SK-N-SH (cell line): ENCODE measurements at regions of chr14 and their contacts with region 1.

Region 1: DNA sequence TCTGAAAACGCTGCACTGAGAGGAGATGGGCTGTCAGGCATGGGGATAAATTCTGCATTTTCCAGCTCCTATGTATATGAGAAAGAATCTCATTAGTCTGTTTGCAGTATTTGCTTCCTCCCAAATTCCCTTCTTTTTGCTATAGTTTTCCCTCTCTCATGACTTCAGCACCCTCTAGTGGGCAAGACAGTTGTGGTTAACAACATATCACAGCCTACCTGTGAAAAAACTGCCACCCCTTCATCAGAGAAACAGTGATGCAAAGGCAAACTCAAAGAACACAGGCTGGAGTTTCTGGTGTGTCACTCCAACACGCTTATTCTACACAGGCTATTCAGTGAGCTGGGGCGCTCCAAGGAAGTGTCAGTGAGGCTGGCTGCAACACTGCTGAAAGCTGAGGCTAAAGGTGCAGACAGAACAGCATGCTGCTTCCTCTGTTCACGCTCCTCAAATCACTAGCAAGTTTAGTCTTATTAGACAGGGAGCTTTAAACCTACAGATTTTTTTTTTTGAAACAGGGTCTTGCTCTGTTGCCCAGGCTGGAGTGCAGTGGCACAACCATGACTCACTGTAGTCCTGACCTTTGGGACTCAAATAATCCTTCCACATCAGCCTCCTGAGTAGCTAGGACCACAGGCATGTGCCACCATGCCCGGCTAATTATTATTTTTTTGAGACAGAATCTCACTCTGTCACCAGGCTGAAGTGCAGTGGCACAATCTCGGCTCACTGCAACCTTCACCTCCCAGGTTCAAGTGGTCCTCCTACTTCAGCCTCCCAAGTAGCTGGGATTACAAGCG is 19.3 kb downstream of the ZC2HC1C start:
- DNase-seq: peak; percentile 66
- H3K4me3 ChIP-seq: no peak overlapping the region
- H3K27ac ChIP-seq: no peak overlapping the region
- H3K4me1 ChIP-seq: no peaks in the 10 kb centered on the region
- H3K27me3 ChIP-seq: no peaks in the 10 kb centered on the region
- CTCF ChIP-seq: peak; percentile 91
- EP300 ChIP-seq: no peak
- RAD21 ChIP-seq: peak; percentile 95

Region 2: DNA sequence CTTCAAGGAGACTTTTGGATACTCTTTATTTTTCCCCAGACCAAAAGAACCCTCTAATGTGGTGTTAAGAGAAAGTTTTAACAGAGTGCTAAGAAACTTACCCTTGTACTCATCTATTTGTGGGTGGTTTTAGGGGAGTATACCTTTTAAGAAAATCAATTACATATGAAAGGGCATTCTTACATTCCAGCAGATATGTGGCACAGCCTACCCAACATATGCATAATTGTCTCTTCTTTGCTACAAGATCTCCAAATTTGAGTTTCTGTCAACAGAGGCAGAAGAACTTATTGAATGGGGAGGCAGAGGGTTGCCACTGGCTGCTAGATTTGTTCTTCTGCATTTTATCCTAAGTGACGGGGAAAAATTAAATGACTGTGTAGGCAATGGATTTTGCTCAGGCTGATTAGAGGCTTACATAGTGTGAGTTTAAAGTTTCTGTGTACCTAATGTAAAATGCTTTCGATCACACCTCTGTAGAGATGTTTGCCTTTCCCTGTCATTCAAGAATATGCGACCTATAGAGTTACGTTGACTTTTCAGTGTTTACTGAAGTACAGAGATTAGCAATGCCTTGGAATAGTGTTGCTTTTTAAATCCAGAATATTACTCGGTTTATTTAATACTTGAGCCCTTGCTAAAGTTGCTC is 267.4 kb before region 1 on chr14:
- CTCF ChIA-PET with region 1: no interaction called
- POLR2A ChIA-PET with region 1: no interaction called
- DNase-seq: no peak
- H3K4me3 ChIP-seq: no peak overlapping the region
- H3K27ac ChIP-seq: no peak overlapping the region
- H3K4me1 ChIP-seq: peaks cover 0 to 7% of the 10 kb centered on the region in 2 experiments; a peak in 2 of 4 replicates
- H3K27me3 ChIP-seq: no peaks in the 10 kb centered on the region
- CTCF ChIP-seq: no peak
- EP300 ChIP-seq: no peak
- RAD21 ChIP-seq: no peak

Region 3: DNA sequence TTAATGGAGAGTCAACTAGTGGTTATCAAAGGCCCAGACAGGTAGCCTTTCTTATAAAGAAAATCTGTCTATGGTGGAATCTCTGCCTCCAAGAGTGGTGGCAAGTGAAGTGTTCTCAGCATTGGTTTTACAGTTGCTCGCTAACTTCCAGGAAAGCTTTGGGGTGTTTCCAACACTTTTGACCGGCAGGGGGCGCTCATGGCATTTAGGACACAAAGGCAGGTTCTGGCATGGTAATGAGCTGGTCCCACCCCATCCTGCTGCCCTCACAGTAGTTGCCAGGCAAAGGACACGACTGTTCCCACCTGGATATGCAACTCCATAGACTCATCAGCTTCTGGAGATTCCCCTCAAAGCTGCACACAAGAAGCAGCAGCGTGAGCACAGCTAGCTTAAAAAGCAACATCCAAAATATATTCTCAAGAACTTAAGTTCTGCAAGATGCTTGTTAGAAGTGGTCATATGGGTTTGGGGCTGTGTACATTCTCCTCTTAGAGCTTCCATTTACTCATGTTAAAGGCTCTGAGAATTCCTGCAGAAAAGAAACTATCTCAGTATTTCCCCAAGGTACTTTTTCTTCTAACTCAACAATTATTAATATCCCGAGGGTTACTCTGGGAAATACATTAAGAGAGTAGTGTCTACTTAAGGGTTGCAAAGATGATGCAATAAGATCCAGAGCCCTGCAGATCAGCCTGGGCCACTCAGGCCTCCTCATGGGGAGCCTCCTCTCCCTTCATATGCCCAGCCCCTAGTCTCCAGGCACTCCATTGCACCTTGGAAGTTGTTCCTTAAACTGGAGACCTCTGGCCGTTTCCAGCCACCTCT is 227.7 kb before region 1 on chr14:
- CTCF ChIA-PET with region 1: interaction called, 44 read pairs
- POLR2A ChIA-PET with region 1: no interaction called
- DNase-seq: peak; percentile 82
- H3K4me3 ChIP-seq: no peak overlapping the region
- H3K27ac ChIP-seq: no peak overlapping the region
- H3K4me1 ChIP-seq: no peaks in the 10 kb centered on the region; a peak in 1 of 4 replicates
- H3K27me3 ChIP-seq: no peaks in the 10 kb centered on the region
- CTCF ChIP-seq: peak; percentile 87
- EP300 ChIP-seq: no peak
- RAD21 ChIP-seq: peak; percentile 94

Region 4: DNA sequence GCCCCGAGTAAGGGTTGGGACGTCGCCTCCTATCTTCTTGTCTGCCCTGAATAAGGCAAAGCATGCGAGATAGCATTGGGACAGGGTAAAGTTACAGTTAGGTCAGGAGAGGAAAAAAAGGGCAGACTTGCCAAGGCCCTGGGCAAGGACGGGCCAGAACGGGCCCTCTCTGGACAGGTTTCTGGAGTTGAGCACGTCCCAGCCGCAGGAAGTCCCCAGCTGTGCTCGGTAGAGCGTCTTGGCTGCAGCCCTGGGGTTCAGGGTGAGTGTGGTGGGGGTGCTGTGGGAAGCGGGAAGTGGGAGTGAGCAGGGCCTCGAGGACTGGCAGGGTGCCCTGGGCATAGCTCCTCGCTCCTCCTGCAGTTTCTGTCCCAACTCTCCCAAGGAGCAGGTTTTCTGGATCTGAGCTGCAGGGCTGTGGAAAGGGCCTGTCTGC is 171.1 kb before region 1 on chr14:
- CTCF ChIA-PET with region 1: interaction called, 24 read pairs
- POLR2A ChIA-PET with region 1: no interaction called
- DNase-seq: no peak
- H3K4me3 ChIP-seq: no peak overlapping the region
- H3K27ac ChIP-seq: no peak overlapping the region
- H3K4me1 ChIP-seq: no peaks in the 10 kb centered on the region; a peak in 1 of 4 replicates
- H3K27me3 ChIP-seq: no peaks in the 10 kb centered on the region
- CTCF ChIP-seq: no peak
- EP300 ChIP-seq: no peak
- RAD21 ChIP-seq: no peak

Region 5: DNA sequence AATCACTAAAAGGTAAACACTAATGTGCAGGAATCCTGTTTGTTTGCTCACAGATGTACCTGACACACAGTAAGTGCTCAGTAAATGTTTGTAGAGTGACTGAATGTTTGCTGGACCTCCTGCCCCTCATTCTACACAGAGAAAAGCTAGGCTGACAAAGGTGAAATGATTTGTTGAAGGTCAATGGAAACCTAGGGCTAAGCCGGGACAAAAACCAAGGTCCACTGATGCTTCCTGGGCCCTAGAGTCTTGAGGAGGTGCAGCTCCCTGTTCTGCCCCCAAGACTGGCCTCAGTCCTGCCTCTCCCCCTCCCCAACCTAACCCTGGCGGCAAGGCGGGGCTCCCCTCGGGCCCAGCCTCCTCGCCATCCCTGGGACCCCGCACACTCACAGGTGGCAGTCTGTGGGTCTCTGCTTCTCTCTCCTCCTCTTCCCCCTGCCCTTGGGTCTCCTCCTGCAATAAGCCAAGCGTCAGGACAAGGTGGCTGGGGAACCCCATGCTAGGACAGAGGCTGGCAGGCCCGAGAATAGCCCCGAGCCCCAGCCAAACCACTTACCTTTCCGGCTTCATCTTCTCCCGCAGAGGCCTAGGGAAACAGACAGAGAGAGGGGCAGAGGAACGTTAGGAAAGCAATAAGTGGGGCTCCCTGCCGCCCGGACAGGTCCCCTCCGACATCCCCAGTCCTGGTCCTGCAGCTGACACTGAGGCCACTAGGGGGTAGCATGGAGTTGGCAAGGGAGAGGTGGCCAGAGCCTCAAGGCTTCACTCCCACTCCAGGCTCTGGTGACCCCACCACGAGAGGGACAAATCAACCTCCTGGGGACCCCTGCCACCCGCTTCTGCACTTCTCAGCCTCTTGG is 142.7 kb before region 1 on chr14:
- CTCF ChIA-PET with region 1: interaction called, 290 read pairs
- POLR2A ChIA-PET with region 1: no interaction called
- DNase-seq: peak; percentile 95
- H3K4me3 ChIP-seq: peak overlapping the region in 1 of 2 experiments; percentile 23; a peak in 1 of 4 replicates
- H3K27ac ChIP-seq: peak overlapping the region in 1 of 2 experiments; percentile 11; a peak in 1 of 4 replicates
- H3K4me1 ChIP-seq: peaks cover 6 to 8% of the 10 kb centered on the region in 2 experiments; a peak in 1 of 4 replicates
- H3K27me3 ChIP-seq: no peaks in the 10 kb centered on the region
- CTCF ChIP-seq: peak; percentile 88
- EP300 ChIP-seq: no peak
- RAD21 ChIP-seq: peak; percentile 92

Region 6: GRCh38 chr14:75022655-75023054 is 66.1 kb before region 1 on chr14:
- CTCF ChIA-PET with region 1: interaction called, 28 read pairs
- POLR2A ChIA-PET with region 1: no interaction called
- DNase-seq: peak; percentile 49
- H3K4me3 ChIP-seq: no peak overlapping the region
- H3K27ac ChIP-seq: no peak overlapping the region
- H3K4me1 ChIP-seq: no peaks in the 10 kb centered on the region
- H3K27me3 ChIP-seq: no peaks in the 10 kb centered on the region
- CTCF ChIP-seq: peak; percentile 46
- EP300 ChIP-seq: no peak
- RAD21 ChIP-seq: peak; percentile 52

Region 7: GRCh38 chr14:75101491-75101890 is 12.7 kb after region 1 on chr14:
- CTCF ChIA-PET with region 1: interaction called, 35 read pairs
- POLR2A ChIA-PET with region 1: no interaction called
- DNase-seq: no peak
- H3K4me3 ChIP-seq: no peak overlapping the region
- H3K27ac ChIP-seq: no peak overlapping the region
- H3K4me1 ChIP-seq: no peaks in the 10 kb centered on the region
- H3K27me3 ChIP-seq: no peaks in the 10 kb centered on the region
- CTCF ChIP-seq: no peak
- EP300 ChIP-seq: no peak
- RAD21 ChIP-seq: no peak

Region 8: DNA sequence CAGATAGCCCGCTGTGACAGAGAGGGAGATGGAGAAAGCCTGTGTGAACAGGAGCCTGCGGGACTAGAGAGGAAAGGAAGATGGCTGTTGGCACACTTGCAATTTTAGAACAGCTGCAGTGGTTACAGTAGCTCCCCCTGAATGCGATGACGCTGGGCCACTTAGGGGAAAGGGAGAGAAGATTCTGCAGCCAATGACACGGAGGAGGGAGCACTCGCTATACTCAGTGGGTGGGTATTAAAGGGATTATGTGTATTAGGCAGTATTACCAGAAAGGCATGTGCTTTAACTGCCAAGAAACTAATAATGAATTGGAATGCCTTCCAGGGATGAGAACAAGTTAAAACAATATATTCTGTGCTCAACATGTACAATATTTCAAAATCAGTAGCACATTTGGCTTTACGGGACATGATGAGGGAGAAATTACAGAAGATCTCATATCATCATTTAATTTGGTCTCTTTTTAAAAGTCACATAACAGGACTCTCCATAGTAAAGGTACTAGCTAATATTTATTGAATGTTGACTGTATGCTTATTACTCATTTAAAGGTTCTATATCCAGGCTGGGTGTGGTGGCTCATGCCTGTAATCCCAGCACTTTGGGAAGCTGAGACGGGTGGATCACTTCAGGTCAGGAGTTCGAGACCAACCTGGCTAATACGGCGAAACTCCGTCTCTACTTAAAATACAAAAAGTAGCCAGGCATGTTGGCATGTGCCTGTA is 153.9 kb after region 1 on chr14:
- CTCF ChIA-PET with region 1: no interaction called
- POLR2A ChIA-PET with region 1: no interaction called
- DNase-seq: no peak
- H3K4me3 ChIP-seq: no peak overlapping the region
- H3K27ac ChIP-seq: no peak overlapping the region
- H3K4me1 ChIP-seq: peaks cover 2 to 13% of the 10 kb centered on the region in 2 experiments; a peak in 2 of 4 replicates
- H3K27me3 ChIP-seq: no peaks in the 10 kb centered on the region
- CTCF ChIP-seq: no peak
- EP300 ChIP-seq: no peak
- RAD21 ChIP-seq: no peak